Heart right ventricle (tissue), 16 donors: ENCODE measurements at regions of chr7 and their contacts with region 1.

Region 1: DNA sequence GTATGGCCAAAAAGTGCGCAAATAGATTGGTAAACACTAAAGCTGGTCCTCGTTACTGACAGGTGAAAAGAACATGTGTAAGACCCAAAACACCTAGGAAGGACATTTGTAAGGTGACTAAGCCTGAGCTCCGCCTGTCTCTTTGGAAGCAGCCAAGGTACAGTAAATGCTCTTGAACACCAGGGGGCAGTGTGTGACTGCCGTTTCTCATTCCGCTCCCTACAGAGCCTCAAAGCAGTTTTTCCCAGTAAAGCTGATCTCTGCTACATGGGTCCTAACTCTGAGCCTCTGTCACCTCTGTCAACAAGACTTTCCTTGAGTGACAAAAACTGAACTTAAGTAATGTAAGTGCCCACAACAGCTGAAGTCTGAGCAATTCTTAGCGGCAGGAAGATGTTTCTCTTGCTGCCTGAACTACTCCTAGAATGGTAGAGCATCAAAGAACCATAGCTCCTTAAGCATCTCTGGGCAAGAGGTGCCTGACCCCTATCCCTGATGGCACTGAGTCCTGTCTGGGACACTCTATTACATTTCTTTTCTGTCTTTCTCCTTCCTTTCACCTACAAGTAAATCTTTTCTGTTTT is 238.0 kb upstream of the INHBA start:
- DNase-seq: peak; percentile 23 to 68
- ATAC-seq: peak; percentile 77 to 89 (median 84)
- H3K4me3 ChIP-seq: no peak overlapping the region
- H3K27ac ChIP-seq: no peak overlapping the region
- H3K4me1 ChIP-seq: peaks cover 0 to 21% (median 10%) of the 10 kb centered on the region in 9 donors
- H3K27me3 ChIP-seq: peaks cover 0 to 28% (median 22%) of the 10 kb centered on the region in 7 donors
- CTCF ChIP-seq: peak; percentile 80 to 95 (median 89)

Region 2: GRCh38 chr7:42690794-42691639 is 750.2 kb after region 1 on chr7:
- intact Hi-C with region 1: loop called in 2 of 10 experiments (anchors 10 kb)
- DNase-seq: no peak
- ATAC-seq: peak in 7 of 8 donors; percentile 14 to 71 (median 41)
- H3K4me3 ChIP-seq: no peak overlapping the region
- H3K27ac ChIP-seq: no peak overlapping the region
- H3K4me1 ChIP-seq: peaks cover 0 to 16% (median 0%) of the 10 kb centered on the region in 9 donors
- H3K27me3 ChIP-seq: peaks cover 0 to 5% (median 0%) of the 10 kb centered on the region in 7 donors
- CTCF ChIP-seq: peak in 8 of 9 donors; percentile 9 to 52 (median 43)

Region 3: GRCh38 chr7:42831718-42832431 is 891.0 kb after region 1 on chr7:
- intact Hi-C with region 1: loop called in 1 of 10 experiments (anchors 5 kb)
- DNase-seq: peak; percentile 14 to 49
- ATAC-seq: peak; percentile 59 to 85 (median 72)
- H3K4me3 ChIP-seq: no peak overlapping the region
- H3K27ac ChIP-seq: no peak overlapping the region
- H3K4me1 ChIP-seq: peaks cover 0 to 14% (median 0%) of the 10 kb centered on the region in 9 donors
- H3K27me3 ChIP-seq: no peaks in the 10 kb centered on the region
- CTCF ChIP-seq: peak; percentile 44 to 79 (median 61)

Region 4: DNA sequence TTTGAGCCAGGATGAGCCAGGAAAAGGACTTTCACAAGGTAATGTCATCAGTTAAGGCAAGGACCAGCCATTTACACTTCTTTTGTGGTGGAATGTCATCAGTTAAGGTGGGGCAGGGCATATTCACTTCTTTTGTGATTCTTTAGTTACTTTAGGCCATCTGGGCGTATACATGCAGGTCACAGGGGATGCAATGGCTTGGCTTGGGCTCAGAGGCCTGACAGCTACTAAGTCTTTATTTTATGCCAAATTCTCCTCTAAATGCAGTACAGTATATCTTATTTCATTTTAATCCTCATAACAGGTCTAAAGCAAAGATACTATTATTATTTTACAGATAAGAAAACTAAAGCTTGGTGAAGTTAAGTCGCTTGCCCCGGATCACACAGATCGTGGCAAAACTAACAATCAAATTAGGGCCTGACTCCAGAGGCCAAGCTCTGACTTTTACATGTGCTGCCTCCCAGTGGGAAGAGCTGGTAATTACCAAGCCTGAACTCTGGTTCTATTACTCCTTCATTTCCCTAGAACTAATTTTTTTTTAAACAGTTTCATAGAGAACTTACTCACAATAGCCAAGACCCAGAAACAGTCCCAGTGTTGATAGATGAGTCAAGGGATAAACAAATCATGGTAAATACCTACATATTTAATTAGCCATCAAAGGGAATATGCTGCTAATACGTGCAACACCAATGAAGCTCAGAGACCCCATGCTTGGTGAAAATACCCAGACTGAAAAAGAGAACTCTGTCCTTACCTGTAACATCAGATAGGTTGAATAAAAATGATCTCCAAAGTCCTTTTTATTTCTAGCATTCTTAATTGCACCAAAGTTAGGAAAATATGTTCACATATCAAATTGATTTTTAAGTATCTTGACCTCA is 935.6 kb after region 1 on chr7:
- intact Hi-C with region 1: loop called in 3 of 10 experiments (anchors 5 to 10 kb)
- DNase-seq: peak in 1 of 2 donors; percentile 45
- ATAC-seq: peak in 3 of 8 donors; percentile 31 to 61 (median 54)
- H3K4me3 ChIP-seq: no peak overlapping the region
- H3K27ac ChIP-seq: no peak overlapping the region
- H3K4me1 ChIP-seq: peaks cover 0 to 7% (median 0%) of the 10 kb centered on the region in 9 donors
- H3K27me3 ChIP-seq: peaks cover 0 to 8% (median 0%) of the 10 kb centered on the region in 7 donors
- CTCF ChIP-seq: peak; percentile 48 to 80 (median 75)